GM13976 (cell line): ENCODE measurements at regions of chr17 and their contacts with region 1.

Region 1: GRCh38 chr17:43994272-43995149 is 9.9 kb upstream of the NAGS start:
- DNase-seq: peak; percentile 82
- CTCF ChIP-seq: peak; percentile 72

Region 2: GRCh38 chr17:43661699-43662412 is 332.7 kb before region 1 on chr17 and contains the start of gene MEOX1:
- in situ Hi-C with region 1: no loop called
- DNase-seq: peak; percentile 72
- CTCF ChIP-seq: no peak

Region 3: GRCh38 chr17:43880420-43880991 is 114.0 kb before region 1 on chr17:
- in situ Hi-C with region 1: loop called (anchors 10 kb)
- DNase-seq: peak; percentile 83
- CTCF ChIP-seq: peak; percentile 64

Region 4: DNA sequence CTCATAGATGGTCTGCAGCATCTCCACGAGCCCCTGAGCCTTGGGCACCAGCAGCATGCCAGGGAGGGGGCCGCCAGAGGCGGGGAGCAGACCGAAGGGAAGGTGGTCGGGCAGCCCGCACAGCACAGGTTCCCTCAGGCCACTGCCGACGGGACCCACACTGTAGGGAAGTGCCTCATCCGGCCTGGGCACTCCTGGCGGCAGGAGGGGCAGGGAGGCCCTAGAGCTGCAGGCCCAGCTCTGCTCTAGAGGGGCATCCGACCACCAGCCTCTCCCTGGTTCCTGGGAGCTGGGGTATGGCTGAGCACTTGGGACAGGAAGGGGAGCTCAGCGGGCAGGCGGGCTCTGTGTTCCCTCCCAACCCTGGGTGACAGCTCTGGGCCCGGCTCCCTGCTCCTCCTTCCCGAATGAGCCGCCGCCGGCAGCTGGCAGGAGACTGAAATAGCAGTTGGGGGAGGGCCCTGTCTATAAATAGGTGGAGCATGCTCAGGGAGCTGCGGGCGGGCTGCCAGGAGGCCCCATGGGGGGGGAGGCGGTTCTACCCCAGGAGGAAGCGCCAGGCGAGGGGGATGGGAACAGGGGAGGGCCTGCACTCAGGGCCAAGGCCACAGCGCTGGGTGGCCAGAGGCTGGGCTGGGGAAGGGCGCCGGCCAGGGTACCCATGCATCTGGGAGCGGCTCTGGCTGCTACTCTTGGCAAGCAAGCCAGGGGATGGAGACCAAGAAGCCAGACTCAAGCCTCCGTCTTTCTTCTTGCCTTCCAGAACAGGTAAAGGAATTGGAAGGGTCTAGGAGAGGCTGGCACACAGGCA is 116.5 kb after region 1 on chr17:
- in situ Hi-C with region 1: no loop called
- DNase-seq: peak; percentile 90
- CTCF ChIP-seq: no peak